CD4-positive, alpha-beta T cell (primary cell): ENCODE measurements at regions of chr3 and their contacts with region 1.

Region 1: DNA sequence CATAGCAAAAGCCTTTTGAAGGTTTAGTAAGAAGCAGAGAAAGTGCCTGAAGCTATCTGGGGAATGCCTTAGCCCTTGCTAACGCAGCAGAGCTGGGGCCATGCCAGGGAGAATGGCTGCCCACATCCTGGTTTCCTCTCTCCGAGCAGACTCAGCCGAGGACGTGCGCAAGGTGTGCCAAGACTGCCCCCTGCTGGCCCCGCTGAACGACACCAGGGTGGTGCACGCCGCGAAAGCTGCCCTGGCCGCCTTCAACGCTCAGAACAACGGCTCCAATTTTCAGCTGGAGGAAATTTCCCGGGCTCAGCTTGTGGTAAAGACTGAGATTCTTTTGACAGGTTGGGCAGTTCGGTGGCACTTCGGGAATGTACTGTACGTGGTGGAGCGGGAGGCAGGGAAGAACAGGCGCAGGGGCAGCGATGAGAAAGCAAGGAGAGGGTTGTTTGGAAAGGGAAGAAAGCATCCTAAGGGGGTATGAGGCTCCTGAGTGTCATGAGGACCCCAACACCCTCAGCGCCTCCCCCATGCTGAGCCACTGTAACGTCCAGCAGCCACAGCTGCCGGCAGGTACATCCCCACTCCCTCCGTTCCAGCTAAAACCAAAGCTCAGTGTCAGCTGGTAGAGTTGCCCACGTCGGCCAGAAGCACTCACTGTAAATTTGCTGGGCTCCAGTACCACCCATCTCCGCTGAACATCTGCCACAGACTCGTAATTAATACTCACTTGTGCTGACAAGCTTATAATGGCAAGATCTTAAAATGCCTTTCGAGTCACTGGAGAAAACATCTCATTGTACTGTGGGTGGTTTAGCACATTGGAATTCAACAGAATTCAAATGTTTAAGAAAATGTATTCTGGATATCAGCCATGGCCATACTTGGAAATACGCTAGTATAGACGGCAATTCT is 4.4 kb downstream of the AHSG start:
- DNase-seq: peak; percentile 72 to 95 (median 84)
- ATAC-seq: peak; percentile 97
- H3K4me3 ChIP-seq: peak overlapping the region; percentile 19
- H3K4me3 Mint-ChIP-seq: peak overlapping the region; percentile 46
- H3K27ac ChIP-seq: no peak overlapping the region
- H3K27ac Mint-ChIP-seq: peak overlapping the region; percentile 30
- H3K4me1 ChIP-seq: peaks cover 19% of the 10 kb centered on the region
- H3K4me1 Mint-ChIP-seq: peaks cover 19% of the 10 kb centered on the region
- H3K27me3 ChIP-seq: peaks cover 0 to 9% of the 10 kb centered on the region in 2 experiments
- H3K27me3 Mint-ChIP-seq: peaks cover 30% of the 10 kb centered on the region
- CTCF ChIP-seq: peak; percentile 94

Region 2: GRCh38 chr3:185976977-185977678 is 640.2 kb before region 1 on chr3:
- CTCF ChIA-PET with region 1: interaction called, 16 read pairs
- POLR2A ChIA-PET with region 1: no interaction called
- intact Hi-C with region 1: loop called (anchors 2 kb)
- DNase-seq: peak; percentile 59 to 88 (median 76)
- ATAC-seq: peak; percentile 87
- H3K4me3 ChIP-seq: no peak overlapping the region
- H3K4me3 Mint-ChIP-seq: no peak overlapping the region
- H3K27ac ChIP-seq: no peak overlapping the region
- H3K27ac Mint-ChIP-seq: no peak overlapping the region
- H3K4me1 ChIP-seq: no peaks in the 10 kb centered on the region
- H3K4me1 Mint-ChIP-seq: peaks cover 8% of the 10 kb centered on the region
- H3K27me3 ChIP-seq: no peaks in the 10 kb centered on the region
- H3K27me3 Mint-ChIP-seq: no peaks in the 10 kb centered on the region
- CTCF ChIP-seq: peak; percentile 95

Region 3: GRCh38 chr3:186044973-186045372 is 572.3 kb before region 1 on chr3:
- CTCF ChIA-PET with region 1: no interaction called
- POLR2A ChIA-PET with region 1: no interaction called
- intact Hi-C with region 1: no loop called
- DNase-seq: no peak
- ATAC-seq: no peak
- H3K4me3 ChIP-seq: no peak overlapping the region
- H3K4me3 Mint-ChIP-seq: no peak overlapping the region
- H3K27ac ChIP-seq: no peak overlapping the region
- H3K27ac Mint-ChIP-seq: no peak overlapping the region
- H3K4me1 ChIP-seq: no peaks in the 10 kb centered on the region
- H3K4me1 Mint-ChIP-seq: no peaks in the 10 kb centered on the region
- H3K27me3 ChIP-seq: no peaks in the 10 kb centered on the region
- H3K27me3 Mint-ChIP-seq: peaks cover 18% of the 10 kb centered on the region
- CTCF ChIP-seq: no peak

Region 4: DNA sequence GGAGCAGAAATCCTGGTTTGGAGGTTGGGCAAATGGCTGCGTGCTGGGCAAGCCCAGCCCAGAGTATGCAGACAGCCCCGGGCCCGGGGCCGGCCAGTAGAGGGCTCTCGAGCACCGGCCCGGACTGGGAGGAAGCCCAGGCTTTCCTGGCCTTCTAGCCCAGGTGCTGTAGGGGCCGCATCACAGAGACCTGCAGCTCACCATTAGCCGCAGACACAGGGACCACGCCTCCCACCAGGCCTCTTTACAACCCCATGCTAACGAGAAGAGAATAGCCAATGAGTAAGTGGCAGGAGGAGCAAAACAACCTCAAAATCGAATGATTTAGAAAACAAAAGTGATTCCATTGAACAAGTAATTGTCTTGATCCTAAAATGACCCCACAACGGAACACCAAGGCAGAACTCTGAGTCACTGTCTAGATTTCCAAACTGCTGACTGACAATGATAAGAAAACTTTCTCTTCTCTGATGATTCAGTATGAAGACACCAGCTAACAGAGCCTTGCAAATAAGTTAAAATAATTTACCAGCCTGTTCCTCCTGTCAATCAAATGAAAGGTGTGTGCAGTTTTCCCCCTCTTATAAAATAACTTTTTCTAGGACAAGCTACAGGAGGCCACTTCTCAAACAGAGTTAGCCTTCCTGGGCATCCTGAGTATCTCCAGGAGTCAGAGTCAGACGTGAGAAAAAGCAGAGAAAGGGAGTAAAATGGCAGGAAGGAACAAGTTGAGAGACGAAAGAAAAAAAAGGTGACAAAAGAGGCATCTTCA is 357.5 kb before region 1 on chr3:
- CTCF ChIA-PET with region 1: interaction called, 3 read pairs
- POLR2A ChIA-PET with region 1: interaction called, 3 read pairs
- intact Hi-C with region 1: loop called in 1 of 2 experiments (anchors 2 kb)
- DNase-seq: peak; percentile 26 to 81 (median 58)
- ATAC-seq: peak; percentile 95
- H3K4me3 ChIP-seq: no peak overlapping the region
- H3K4me3 Mint-ChIP-seq: no peak overlapping the region
- H3K27ac ChIP-seq: no peak overlapping the region
- H3K27ac Mint-ChIP-seq: no peak overlapping the region
- H3K4me1 ChIP-seq: peaks cover 14% of the 10 kb centered on the region
- H3K4me1 Mint-ChIP-seq: peaks cover 15% of the 10 kb centered on the region
- H3K27me3 ChIP-seq: no peaks in the 10 kb centered on the region
- H3K27me3 Mint-ChIP-seq: no peaks in the 10 kb centered on the region
- CTCF ChIP-seq: peak; percentile 76

Region 5: GRCh38 chr3:186570096-186570940 is 47.0 kb before region 1 on chr3 and contains the start of gene DNAJB11:
- CTCF ChIA-PET with region 1: interaction called, 9 read pairs
- POLR2A ChIA-PET with region 1: interaction called, 9 read pairs
- intact Hi-C with region 1: loop called in 1 of 2 experiments (anchors 2 kb)
- DNase-seq: peak; percentile 91 to 100 (median 97)
- ATAC-seq: peak; percentile 83
- H3K4me3 ChIP-seq: peak within 1 kb of the TSS; percentile 79
- H3K4me3 Mint-ChIP-seq: peak within 1 kb of the TSS; percentile 99
- H3K27ac ChIP-seq: peak within 1 kb of the TSS; percentile 90 to 94
- H3K27ac Mint-ChIP-seq: peak within 1 kb of the TSS; percentile 94
- H3K4me1 ChIP-seq: peaks cover 37% of the 10 kb centered on the region
- H3K4me1 Mint-ChIP-seq: peaks cover 69% of the 10 kb centered on the region
- H3K27me3 ChIP-seq: no peaks in the 10 kb centered on the region
- H3K27me3 Mint-ChIP-seq: no peaks in the 10 kb centered on the region
- CTCF ChIP-seq: no peak
- total RNA-seq, gene DNAJB11: 69.3 to 70.3 TPM

Region 6: DNA sequence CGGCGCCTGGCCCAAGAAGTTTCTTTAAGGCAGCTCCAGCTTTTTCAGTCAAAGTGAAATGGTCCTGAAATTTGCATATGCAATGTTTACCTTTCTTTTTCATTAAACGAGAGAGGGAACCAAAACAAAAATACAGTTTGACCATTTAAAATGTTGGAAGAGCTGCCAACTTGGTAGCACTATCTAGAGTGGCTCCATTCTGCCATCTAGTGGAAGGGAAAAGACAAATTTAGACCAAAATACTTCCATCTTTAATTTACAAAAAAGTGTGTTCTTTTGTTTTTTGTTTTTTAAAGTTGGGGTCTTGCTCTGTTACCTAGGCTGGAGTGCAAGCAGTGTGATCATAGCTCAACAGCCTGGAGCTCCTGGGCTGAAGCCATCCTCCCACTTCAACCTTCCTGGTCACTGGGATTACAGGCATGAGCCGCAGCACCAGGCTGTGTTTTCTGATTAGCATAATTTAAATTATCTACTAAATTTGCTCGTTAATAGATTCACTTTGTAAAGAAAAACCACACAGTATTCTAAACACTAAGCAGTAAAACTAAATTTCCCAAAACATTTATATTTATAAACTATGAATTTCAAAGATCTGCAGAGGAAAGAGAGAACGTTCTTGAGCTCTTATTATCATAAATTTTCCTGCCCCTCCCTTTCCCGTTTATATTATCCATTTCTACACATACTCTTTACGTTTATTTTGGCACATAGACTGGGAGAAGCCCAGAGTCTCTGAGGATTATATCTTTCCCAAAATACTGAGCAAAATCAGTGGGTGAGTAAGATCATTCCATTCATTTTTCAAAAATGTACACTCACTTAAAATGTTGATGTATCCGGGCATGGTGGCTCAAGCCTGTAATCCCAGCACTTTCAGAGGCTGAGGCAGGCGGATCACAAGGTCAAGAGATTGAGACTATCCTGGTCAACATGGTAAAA is 204.4 kb after region 1 on chr3:
- CTCF ChIA-PET with region 1: interaction called, 49 read pairs
- POLR2A ChIA-PET with region 1: interaction called, 7 read pairs
- intact Hi-C with region 1: loop called (anchors 1 kb)
- DNase-seq: peak in 4 of 14 experiments; percentile 31 to 75 (median 70)
- ATAC-seq: no peak
- H3K4me3 ChIP-seq: no peak overlapping the region
- H3K4me3 Mint-ChIP-seq: no peak overlapping the region
- H3K27ac ChIP-seq: no peak overlapping the region
- H3K27ac Mint-ChIP-seq: no peak overlapping the region
- H3K4me1 ChIP-seq: peaks cover 16% of the 10 kb centered on the region
- H3K4me1 Mint-ChIP-seq: peaks cover 14% of the 10 kb centered on the region
- H3K27me3 ChIP-seq: peaks cover 20 to 25% of the 10 kb centered on the region in 2 experiments
- H3K27me3 Mint-ChIP-seq: peaks cover 20% of the 10 kb centered on the region
- CTCF ChIP-seq: peak; percentile 78

Region 7: DNA sequence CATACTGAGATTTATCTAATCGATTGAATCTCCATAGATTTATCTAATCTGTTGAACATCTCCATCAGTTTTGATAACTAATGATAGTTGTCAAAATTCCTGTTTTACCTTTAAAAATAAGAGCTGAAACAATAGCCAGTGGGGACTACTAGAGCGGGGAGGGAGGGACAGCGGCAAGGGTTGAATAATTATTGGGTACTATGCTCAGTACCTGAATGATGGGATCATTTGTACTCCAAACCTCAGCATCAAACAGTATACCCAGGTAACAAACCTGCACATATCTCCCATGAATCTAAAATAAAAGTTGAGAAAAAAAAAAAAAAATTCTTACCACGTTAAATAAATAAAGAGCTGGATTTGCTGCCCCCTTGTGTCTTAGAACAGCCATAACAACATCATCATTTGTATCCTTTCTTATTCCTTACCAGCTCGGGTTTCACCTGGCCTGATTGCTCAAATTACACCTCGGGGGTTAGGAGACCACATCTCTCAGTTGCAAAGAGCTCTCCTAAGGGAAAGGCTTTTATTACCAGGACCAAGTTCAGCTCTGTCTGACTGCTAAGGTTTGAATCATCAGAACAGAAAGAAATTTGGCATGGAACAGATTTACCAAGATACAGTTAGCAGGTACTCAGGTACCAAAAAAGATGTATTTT is 547.7 kb after region 1 on chr3:
- CTCF ChIA-PET with region 1: no interaction called
- POLR2A ChIA-PET with region 1: no interaction called
- intact Hi-C with region 1: loop called in 1 of 2 experiments (anchors 5 kb)
- DNase-seq: peak in 10 of 14 experiments; percentile 3 to 84 (median 28)
- ATAC-seq: peak; percentile 81
- H3K4me3 ChIP-seq: no peak overlapping the region
- H3K4me3 Mint-ChIP-seq: no peak overlapping the region
- H3K27ac ChIP-seq: no peak overlapping the region
- H3K27ac Mint-ChIP-seq: no peak overlapping the region
- H3K4me1 ChIP-seq: peaks cover 5% of the 10 kb centered on the region
- H3K4me1 Mint-ChIP-seq: peaks cover 11% of the 10 kb centered on the region
- H3K27me3 ChIP-seq: no peaks in the 10 kb centered on the region
- H3K27me3 Mint-ChIP-seq: no peaks in the 10 kb centered on the region
- CTCF ChIP-seq: peak; percentile 82